Activated CD4-positive, alpha-beta memory T cell treated with anti-CD3 and anti-CD28 coated beads, Interleukin-2, amount 10 ng/mL, durations not matched to agents 7 days and 5 days (primary cell): ENCODE measurements at regions of chr12 and their contacts with region 1.

Region 1: DNA sequence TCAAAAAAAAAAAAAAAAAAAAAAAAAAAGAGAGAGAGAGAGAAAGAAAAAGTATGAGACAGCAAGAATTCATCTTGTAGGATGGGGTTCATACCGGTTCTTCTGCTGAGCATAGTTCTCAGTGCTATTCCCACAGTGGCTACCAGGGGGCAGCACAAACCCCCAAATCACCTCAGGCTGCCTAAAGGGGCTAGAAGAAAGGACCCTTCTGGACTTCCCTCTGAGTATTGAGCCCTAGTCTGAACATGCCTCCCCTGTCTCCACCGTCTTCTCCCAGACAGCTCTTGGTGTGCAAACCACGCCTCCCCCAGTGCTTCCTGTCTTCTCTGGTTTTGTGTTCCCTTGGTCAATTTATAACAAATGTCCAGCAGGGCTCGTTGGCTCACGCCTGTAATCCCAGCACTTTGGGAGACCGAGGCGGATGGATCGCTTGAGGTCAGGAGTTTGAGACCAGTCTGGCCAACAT is 31.3 kb upstream of the SMUG1 start:
- DNase-seq: peak; percentile 75
- H3K4me3 Mint-ChIP-seq: no peak overlapping the region
- H3K27ac Mint-ChIP-seq: no peak overlapping the region
- H3K4me1 Mint-ChIP-seq: peaks cover 40% of the 10 kb centered on the region
- H3K27me3 Mint-ChIP-seq: peaks cover 8% of the 10 kb centered on the region

Region 2: DNA sequence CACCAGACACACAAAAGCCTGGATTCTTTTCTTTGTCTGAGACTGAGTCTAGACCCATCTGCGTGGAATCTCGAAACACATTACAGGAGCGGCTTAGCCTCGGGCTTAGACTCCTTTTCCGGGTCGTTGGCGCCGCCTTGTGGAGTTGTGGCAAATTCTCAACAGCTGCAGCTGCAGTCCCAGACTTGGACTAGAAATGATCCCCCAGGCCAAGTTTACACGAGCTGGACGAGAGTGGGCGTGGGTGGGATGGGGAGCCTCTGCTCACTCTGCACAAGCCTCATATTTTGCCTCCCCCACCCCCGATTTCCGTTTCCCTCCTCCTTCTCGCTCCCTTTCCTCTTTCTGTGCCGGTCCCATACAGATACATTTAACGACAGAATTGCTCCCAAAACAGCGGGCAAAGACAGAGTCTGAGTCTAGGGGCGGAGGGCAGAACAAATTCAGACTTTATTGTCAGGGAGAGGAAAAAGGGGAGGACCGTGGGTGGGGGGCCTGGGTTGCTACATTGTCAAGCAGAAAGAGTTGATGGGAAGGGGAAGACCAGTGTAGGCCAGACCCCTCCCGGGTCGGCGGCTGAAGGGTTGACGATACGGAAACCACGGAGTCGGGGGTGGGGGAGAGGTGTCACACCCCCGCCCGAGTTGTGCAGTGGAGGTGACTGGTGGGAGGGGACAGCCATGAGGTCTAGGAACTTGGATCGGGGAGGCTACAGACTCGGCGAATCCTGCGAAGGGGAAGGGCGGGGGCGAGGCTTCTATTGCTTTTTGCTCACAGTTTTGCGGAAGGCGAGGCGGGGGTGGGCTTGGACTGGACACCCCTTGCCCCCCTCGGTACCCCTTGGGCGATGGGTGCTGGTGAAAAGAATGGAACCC is 148.8 kb after region 1 on chr12:
- CTCF ChIA-PET with region 1: interaction called, 14 read pairs
- POLR2A ChIA-PET with region 1: interaction called, 3 read pairs
- DNase-seq: peak; percentile 90
- H3K4me3 Mint-ChIP-seq: no peak overlapping the region
- H3K27ac Mint-ChIP-seq: no peak overlapping the region
- H3K4me1 Mint-ChIP-seq: peaks cover 54% of the 10 kb centered on the region
- H3K27me3 Mint-ChIP-seq: peaks cover 16% of the 10 kb centered on the region